Endothelial cell of umbilical vein (primary cell): ENCODE measurements at regions of chr7 and their contacts with region 1.

Region 1: DNA sequence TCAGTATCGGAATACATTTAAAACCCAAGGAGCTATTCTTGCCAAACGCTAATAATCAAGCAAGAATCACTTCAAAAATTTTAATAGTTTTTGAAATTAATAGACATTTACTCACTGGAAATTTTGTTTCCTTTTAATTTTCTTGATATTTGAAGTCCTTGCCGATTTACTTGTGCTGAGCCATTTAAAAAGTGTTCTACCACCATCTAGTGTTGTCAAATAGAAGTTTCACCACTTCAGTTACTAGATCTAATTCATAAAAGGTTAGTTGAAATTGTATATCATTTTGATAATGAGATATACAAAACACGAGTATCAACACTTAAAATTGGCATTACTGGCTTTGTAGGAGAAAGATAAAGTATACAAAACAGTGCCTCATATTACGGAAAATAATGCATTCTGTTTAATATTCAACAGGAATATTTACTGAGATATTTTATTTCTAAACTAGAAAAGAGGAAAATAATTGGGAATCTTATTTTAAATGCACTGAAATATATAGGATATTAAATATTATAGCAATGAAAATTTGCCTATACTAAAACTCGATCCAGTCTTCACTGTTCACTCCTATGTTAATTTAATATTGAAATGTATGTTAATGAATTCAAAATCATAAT is 664.8 kb upstream of the SEMA3D start:
- DNase-seq: peak; percentile 42
- H3K4me3 ChIP-seq: no peak overlapping the region
- H3K27ac ChIP-seq: no peak overlapping the region
- H3K4me1 ChIP-seq: no peaks in the 10 kb centered on the region
- H3K27me3 ChIP-seq: no peaks in the 10 kb centered on the region
- CTCF ChIP-seq: peak; percentile 6 to 11
- POLR2A ChIP-seq: no peak

Region 2: DNA sequence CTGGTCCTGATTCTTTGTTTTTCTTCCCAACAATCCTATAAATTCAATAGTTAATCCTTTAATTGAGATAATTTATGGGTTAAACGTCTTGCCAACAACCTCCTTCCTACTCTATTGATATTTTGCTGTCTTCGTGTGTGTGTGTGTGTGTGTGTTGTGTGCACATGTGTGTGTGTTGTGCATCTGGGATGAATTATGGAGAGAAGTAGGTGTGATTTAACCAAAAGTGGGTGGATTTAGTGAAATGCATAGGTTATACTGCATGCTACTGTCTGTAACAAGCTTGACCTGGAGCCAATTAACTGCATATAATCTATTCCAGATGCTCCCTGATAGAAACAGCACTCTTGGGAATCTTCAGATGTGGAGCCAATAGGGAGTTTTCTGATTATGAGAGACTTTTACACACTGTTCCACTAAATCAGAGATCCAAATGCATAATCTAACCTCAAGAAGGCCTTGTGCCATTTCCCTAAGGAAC is 726.0 kb before region 1 on chr7:
- CTCF ChIA-PET with region 1: no interaction called
- POLR2A ChIA-PET with region 1: no interaction called
- dilution Hi-C with region 1: no loop called
- intact Hi-C with region 1: no loop called
- DNase-seq: no peak
- H3K4me3 ChIP-seq: no peak overlapping the region
- H3K27ac ChIP-seq: no peak overlapping the region
- H3K4me1 ChIP-seq: no peaks in the 10 kb centered on the region
- H3K27me3 ChIP-seq: no peaks in the 10 kb centered on the region
- CTCF ChIP-seq: no peak
- POLR2A ChIP-seq: no peak

Region 3: DNA sequence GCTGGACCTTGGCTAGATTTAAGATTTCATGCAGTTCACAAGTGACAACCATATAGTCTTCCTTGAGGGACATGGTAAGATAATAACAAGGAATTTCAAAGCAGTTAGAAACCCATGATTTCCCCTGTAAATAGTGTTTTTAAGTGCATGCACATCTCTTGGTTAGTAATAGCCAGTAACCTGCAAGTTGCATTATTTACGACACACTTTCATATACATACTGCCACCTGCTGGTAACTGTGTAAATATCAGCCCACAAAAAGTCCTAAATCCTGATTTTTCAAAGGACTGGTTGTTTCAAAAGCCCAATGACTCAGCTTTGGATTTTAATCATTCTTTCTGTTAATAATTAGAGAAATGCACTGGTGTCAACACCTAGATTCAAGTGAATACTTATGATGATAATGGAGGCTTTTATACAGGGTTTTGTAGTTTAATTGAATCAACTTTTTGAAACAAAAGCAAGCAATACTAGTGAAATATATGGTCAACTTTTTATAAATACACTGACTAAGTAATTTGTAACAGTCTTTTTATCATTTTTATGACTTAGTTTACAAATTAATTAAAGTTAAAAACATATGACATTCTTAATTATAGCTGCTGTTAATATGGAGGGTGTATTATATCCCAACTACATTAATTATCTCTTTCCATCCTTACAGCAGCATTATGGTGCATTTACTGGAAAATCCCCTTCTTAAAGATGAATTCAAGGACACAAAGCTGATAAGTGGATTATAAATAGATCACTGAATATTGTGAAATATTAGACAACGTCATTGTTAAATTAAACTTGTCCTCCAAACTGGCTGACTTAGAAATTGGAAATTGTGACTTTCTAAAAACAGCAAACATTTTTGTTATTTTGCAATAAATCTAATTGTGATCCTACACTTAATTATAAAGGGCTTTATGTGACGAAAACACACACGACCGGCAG is 297.2 kb before region 1 on chr7:
- CTCF ChIA-PET with region 1: interaction called, 4 read pairs
- POLR2A ChIA-PET with region 1: no interaction called
- dilution Hi-C with region 1: no loop called
- intact Hi-C with region 1: loop called (anchors 5 kb)
- DNase-seq: peak; percentile 63
- H3K4me3 ChIP-seq: no peak overlapping the region
- H3K27ac ChIP-seq: no peak overlapping the region
- H3K4me1 ChIP-seq: no peaks in the 10 kb centered on the region
- H3K27me3 ChIP-seq: no peaks in the 10 kb centered on the region
- CTCF ChIP-seq: peak; percentile 44 to 49
- POLR2A ChIP-seq: no peak

Region 4: GRCh38 chr7:85673881-85674280 is 177.8 kb before region 1 on chr7:
- CTCF ChIA-PET with region 1: no interaction called
- POLR2A ChIA-PET with region 1: no interaction called
- dilution Hi-C with region 1: no loop called
- intact Hi-C with region 1: no loop called
- DNase-seq: no peak
- H3K4me3 ChIP-seq: no peak overlapping the region
- H3K27ac ChIP-seq: no peak overlapping the region
- H3K4me1 ChIP-seq: no peaks in the 10 kb centered on the region
- H3K27me3 ChIP-seq: no peaks in the 10 kb centered on the region
- CTCF ChIP-seq: no peak
- POLR2A ChIP-seq: no peak

Region 5: GRCh38 chr7:85829817-85830432 is 21.8 kb before region 1 on chr7:
- CTCF ChIA-PET with region 1: interaction called, 11 read pairs
- POLR2A ChIA-PET with region 1: no interaction called
- dilution Hi-C with region 1: no loop called
- intact Hi-C with region 1: no loop called
- DNase-seq: no peak
- H3K4me3 ChIP-seq: no peak overlapping the region
- H3K27ac ChIP-seq: no peak overlapping the region
- H3K4me1 ChIP-seq: no peaks in the 10 kb centered on the region
- H3K27me3 ChIP-seq: no peaks in the 10 kb centered on the region
- CTCF ChIP-seq: no peak
- POLR2A ChIP-seq: no peak